ENCODE measurements at regions of chr20 and their contacts with region 1.

Region 1: GRCh38 chr20:58087193-58087858 is 141.1 kb downstream of the ANKRD60 start:
- DNase-seq: no peak
- ATAC-seq: peak; percentile 37

Region 2: DNA sequence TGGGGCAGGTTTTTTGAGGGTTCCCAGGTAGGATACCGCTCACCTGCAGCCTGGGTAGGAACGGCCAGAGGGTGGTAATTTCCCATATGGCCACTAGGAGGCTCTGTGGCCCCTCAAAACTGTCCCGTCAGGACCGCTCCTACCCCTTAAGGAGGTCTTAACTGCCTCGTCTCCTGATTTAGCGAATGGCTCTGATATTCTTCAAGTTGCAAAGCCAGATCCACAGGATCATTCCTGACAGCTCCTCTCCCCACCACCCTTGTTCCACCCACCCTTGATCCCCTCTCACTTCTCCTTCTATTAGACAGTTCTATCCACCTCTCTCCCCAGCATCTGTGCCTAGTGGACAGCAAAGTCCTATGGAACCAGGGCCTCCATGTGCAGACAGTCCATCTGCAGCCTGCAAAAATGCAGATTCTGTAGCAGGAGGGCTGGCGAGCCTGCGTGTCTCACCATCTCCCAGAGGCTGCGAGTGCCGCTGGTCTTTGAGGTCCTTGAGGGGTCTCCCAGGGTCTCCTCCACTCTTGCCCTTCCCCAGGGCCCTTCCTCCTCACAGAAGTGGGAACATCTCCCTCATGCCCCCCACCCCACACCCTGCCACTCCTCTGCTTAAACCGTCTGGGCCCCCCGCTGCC is 432.8 kb before region 1 on chr20:
- intact Hi-C with region 1: loop called (anchors 10 kb)
- DNase-seq: peak; percentile 53
- ATAC-seq: peak; percentile 69

Region 3: DNA sequence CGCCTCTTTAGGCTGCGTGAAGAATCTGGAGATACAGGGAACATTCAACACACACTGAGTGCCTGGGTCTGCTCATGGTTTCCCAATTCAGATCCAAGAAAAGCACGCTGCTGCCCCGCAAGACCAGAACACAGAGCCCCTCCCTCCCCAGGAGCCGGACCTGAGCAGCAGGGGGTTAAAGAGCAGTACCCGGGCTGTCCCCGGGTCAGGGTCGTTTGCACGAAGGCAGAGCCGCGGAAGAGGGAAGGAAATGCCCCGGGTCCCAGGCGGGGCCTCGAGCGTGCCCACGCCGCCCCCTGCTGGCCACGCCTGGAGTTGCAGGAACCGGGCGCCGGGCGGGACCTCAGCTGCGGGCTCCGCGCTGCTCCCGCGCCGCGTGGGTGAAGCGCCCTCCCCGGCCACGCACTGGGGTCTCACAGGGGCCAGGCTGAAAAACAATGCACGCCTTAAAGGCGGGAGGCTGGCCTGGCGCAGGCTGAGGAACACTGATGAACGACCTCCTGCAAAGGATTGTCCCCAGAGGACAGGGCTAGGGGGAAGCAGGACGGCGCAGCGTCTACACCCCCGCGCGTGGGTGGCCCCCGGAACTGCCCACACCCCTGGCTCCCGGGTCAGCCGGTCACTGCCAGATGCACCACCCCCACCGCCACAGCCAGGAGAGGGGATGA is 92.2 kb after region 1 on chr20:
- intact Hi-C with region 1: no loop called
- DNase-seq: peak; percentile 83
- ATAC-seq: peak; percentile 81

Region 4: GRCh38 chr20:59042796-59043660 is 955.7 kb after region 1 on chr20:
- intact Hi-C with region 1: no loop called
- DNase-seq: peak; percentile 98
- ATAC-seq: peak; percentile 98

Measured in left ventricle myocardium superior (tissue), 1 donor.